SK-N-SH (cell line): ENCODE measurements at regions of chr11 and their contacts with region 1.

Region 1: GRCh38 chr11:67317205-67317887 is 14.0 kb downstream of the SSH3 start:
- DNase-seq: peak; percentile 98
- H3K4me3 ChIP-seq: peak overlapping the region; percentile 83 to 85
- H3K27ac ChIP-seq: peak overlapping the region; percentile 84 to 95
- H3K4me1 ChIP-seq: peaks cover 4 to 16% of the 10 kb centered on the region in 2 experiments; a peak in 1 of 4 replicates
- H3K27me3 ChIP-seq: no peaks in the 10 kb centered on the region
- CTCF ChIP-seq: peak; percentile 94
- EP300 ChIP-seq: no peak
- RAD21 ChIP-seq: peak; percentile 92

Region 2: GRCh38 chr11:67082035-67082791 is 235.1 kb before region 1 on chr11:
- CTCF ChIA-PET with region 1: interaction called, 34 read pairs
- POLR2A ChIA-PET with region 1: interaction called, 3 read pairs
- DNase-seq: peak; percentile 55
- H3K4me3 ChIP-seq: no peak overlapping the region
- H3K27ac ChIP-seq: no peak overlapping the region
- H3K4me1 ChIP-seq: no peaks in the 10 kb centered on the region
- H3K27me3 ChIP-seq: no peaks in the 10 kb centered on the region
- CTCF ChIP-seq: no peak
- EP300 ChIP-seq: no peak
- RAD21 ChIP-seq: 0 out of 2 replicates have a peak, but pooled peaks have one; percentile 15

Region 3: DNA sequence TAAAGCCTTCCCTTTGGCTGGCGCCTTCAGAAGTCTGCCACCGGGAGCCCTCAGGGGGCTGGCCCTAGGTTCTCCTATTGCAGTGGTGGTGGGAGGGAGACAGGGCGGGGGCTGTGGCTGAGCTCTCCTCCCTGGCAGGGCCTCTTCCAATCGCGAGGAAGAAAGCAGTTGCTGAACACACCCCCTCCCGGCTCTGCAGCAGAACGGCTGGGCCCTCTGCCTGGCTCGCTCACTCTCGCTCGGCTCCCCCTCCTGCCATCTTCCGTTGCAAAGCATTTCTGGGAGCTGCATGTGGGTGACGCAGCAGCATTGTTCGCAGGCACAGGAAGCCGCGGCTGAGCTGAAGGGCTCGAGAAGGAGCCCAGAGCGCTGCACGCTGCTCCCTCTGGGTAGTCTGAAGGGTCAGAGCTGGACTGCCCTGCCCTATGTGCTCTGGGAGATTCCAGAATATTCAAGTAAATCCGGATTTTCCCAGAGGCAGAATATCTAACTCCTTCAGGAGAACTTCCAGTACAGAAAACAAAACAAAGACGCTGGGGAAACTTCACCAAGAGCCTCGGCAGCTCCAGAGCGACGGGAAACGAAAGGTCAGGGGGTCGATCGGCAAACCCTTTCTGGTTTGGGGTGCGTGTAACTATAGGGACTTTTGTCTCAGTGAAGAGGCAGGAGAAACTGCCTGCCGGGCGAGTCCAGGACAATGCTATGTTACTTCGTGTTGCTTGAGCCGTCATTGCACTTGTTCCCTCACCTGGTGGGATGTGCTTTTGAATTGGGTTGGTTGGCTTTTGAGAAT is 77.4 kb before region 1 on chr11:
- CTCF ChIA-PET with region 1: interaction called, 18 read pairs
- POLR2A ChIA-PET with region 1: interaction called, 5 read pairs
- DNase-seq: peak; percentile 91
- H3K4me3 ChIP-seq: peak overlapping the region; percentile 70 to 89
- H3K27ac ChIP-seq: peak overlapping the region; percentile 89 to 96
- H3K4me1 ChIP-seq: peaks cover 7 to 24% of the 10 kb centered on the region in 2 experiments; a peak in 3 of 4 replicates
- H3K27me3 ChIP-seq: no peaks in the 10 kb centered on the region
- CTCF ChIP-seq: no peak
- EP300 ChIP-seq: peak in 1 of 2 experiments; percentile 60; a peak in 3 of 4 replicates
- RAD21 ChIP-seq: peak; percentile 4; the same call in 1 of the 2 replicates

Region 4: GRCh38 chr11:67277231-67277961 is 40.0 kb before region 1 on chr11:
- CTCF ChIA-PET with region 1: interaction called, 12 read pairs
- POLR2A ChIA-PET with region 1: no interaction called
- DNase-seq: no peak
- H3K4me3 ChIP-seq: no peak overlapping the region
- H3K27ac ChIP-seq: no peak overlapping the region; a peak in 1 of 4 replicates
- H3K4me1 ChIP-seq: peaks cover 0 to 6% of the 10 kb centered on the region in 2 experiments; a peak in 2 of 4 replicates
- H3K27me3 ChIP-seq: no peaks in the 10 kb centered on the region
- CTCF ChIP-seq: no peak
- EP300 ChIP-seq: no peak
- RAD21 ChIP-seq: no peak

Region 5: DNA sequence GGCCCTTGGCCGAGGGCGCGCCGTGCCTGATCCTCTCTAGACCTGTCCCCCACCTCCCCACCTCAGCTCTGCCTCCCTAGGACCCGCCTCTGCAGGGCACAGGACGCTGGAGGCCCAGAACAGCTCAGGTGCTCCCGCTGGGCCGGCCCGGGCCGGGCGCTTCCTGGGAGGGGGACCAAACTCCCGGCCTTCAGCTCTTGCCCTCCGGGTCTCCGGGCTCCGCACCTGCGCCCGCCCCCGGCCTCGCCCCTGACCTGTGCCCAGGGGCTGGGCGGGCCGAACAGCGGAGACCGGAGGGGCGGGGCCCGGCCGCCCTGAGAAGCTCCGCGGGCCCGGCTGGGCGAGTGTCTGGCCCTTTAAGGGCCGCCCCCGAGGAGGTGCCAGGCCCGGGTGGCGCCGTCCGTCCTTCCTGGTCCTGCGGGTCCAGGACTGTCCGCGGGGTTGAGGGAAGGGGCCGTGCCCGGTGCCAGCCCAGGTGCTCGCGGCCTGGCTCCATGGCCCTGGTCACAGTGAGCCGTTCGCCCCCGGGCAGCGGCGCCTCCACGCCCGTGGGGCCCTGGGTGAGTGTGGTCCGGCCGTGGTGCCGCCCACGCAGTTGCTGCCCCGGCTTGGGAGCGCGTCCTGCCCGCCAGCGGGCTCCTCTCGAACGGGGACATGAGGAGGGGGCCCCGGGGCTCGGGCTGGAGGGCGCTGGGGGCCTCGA is 14.1 kb before region 1 on chr11 and contains the start of gene SSH3:
- CTCF ChIA-PET with region 1: interaction called, 37 read pairs
- POLR2A ChIA-PET with region 1: interaction called, 14 read pairs
- DNase-seq: peak; percentile 89
- H3K4me3 ChIP-seq: peak within 1 kb of the TSS; percentile 87 to 88
- H3K27ac ChIP-seq: peak within 1 kb of the TSS in 1 of 2 experiments; percentile 65; a peak in 1 of 4 replicates
- H3K4me1 ChIP-seq: peaks cover 13 to 17% of the 10 kb centered on the region in 2 experiments; a peak in 2 of 4 replicates
- H3K27me3 ChIP-seq: no peaks in the 10 kb centered on the region
- CTCF ChIP-seq: no peak
- EP300 ChIP-seq: no peak
- RAD21 ChIP-seq: no peak
- polyA plus RNA-seq, gene SSH3: 13.5 and 17.1 TPM in 2 replicates

Region 6: GRCh38 chr11:67353317-67354074 is 36.1 kb after region 1 on chr11 and contains the start of gene POLD4:
- CTCF ChIA-PET with region 1: interaction called, 29 read pairs
- POLR2A ChIA-PET with region 1: interaction called, 6 read pairs
- DNase-seq: peak; percentile 97
- H3K4me3 ChIP-seq: peak within 1 kb of the TSS; percentile 66 to 76
- H3K27ac ChIP-seq: peak within 1 kb of the TSS; percentile 92 to 99
- H3K4me1 ChIP-seq: peaks cover 44 to 51% of the 10 kb centered on the region in 2 experiments; a peak in 3 of 4 replicates
- H3K27me3 ChIP-seq: no peaks in the 10 kb centered on the region
- CTCF ChIP-seq: no peak
- EP300 ChIP-seq: no peak
- RAD21 ChIP-seq: no peak
- polyA plus RNA-seq, gene POLD4: 80.4 and 89.4 TPM in 2 replicates

Region 7: GRCh38 chr11:67382276-67383136 is 65.2 kb after region 1 on chr11:
- CTCF ChIA-PET with region 1: interaction called, 84 read pairs
- POLR2A ChIA-PET with region 1: no interaction called
- DNase-seq: peak; percentile 86
- H3K4me3 ChIP-seq: no peak overlapping the region; a peak in 1 of 4 replicates
- H3K27ac ChIP-seq: no peak overlapping the region
- H3K4me1 ChIP-seq: peaks cover 20 to 29% of the 10 kb centered on the region in 2 experiments; a peak in 3 of 4 replicates
- H3K27me3 ChIP-seq: no peaks in the 10 kb centered on the region
- CTCF ChIP-seq: peak; percentile 94
- EP300 ChIP-seq: no peak
- RAD21 ChIP-seq: peak; percentile 99